MCF 10A (cell line): ENCODE measurements at regions of chr7 and their contacts with region 1.

Region 1: GRCh38 chr7:22559829-22560489 is 60.0 kb upstream of the STEAP1B start:
- DNase-seq: peak; percentile 85
- H3K4me3 Mint-ChIP-seq: no peak overlapping the region
- H3K27ac Mint-ChIP-seq: no peak overlapping the region
- H3K4me1 Mint-ChIP-seq: peaks cover 25% of the 10 kb centered on the region
- H3K27me3 Mint-ChIP-seq: peaks cover 7% of the 10 kb centered on the region
- CTCF ChIP-seq: peak; percentile 85

Region 2: DNA sequence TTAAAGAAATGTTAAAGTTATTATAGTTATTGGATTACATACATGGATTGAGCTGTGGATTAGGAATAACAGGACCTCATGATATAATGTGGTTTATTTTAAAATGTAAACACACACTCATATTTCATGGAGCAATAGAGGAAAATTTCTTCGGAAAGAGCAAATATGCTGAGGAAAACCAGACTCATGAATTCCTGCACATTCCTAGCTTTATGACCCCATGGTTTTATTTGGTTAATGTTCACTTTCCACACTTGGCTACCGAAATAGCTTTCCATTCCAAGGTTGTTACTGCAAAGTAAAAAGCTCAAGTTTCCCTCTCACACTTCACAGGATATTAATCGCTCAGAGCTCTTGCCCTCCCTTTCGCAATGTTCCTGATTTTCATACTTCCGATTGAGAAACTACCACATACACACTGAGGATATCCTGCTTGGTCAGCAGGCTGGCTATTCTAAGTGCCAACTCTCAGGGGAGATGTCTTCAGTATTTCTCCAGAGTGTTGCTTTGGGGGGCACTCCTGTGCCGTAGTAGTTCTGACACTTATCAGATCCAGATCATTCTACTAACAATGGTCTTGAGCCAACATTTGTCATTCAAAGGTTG is 17.5 kb after region 1 on chr7:
- CTCF ChIA-PET with region 1: interaction called, 17 read pairs
- POLR2A ChIA-PET with region 1: interaction called, 3 read pairs
- intact Hi-C with region 1: loop called (anchors 1 kb)
- DNase-seq: peak; percentile 95
- H3K4me3 Mint-ChIP-seq: no peak overlapping the region
- H3K27ac Mint-ChIP-seq: peak overlapping the region; percentile 85
- H3K4me1 Mint-ChIP-seq: peaks cover 42% of the 10 kb centered on the region
- H3K27me3 Mint-ChIP-seq: no peaks in the 10 kb centered on the region
- CTCF ChIP-seq: no peak

Region 3: GRCh38 chr7:22627136-22627535 is 67.2 kb after region 1 on chr7:
- CTCF ChIA-PET with region 1: no interaction called
- POLR2A ChIA-PET with region 1: no interaction called
- intact Hi-C with region 1: no loop called
- DNase-seq: no peak
- H3K4me3 Mint-ChIP-seq: no peak overlapping the region
- H3K27ac Mint-ChIP-seq: no peak overlapping the region
- H3K4me1 Mint-ChIP-seq: no peaks in the 10 kb centered on the region
- H3K27me3 Mint-ChIP-seq: no peaks in the 10 kb centered on the region
- CTCF ChIP-seq: no peak

Region 4: GRCh38 chr7:22657479-22657878 is 97.5 kb after region 1 on chr7:
- CTCF ChIA-PET with region 1: no interaction called
- POLR2A ChIA-PET with region 1: no interaction called
- intact Hi-C with region 1: loop called (anchors 1 kb)
- DNase-seq: no peak
- H3K4me3 Mint-ChIP-seq: no peak overlapping the region
- H3K27ac Mint-ChIP-seq: no peak overlapping the region
- H3K4me1 Mint-ChIP-seq: peaks cover 4% of the 10 kb centered on the region
- H3K27me3 Mint-ChIP-seq: no peaks in the 10 kb centered on the region
- CTCF ChIP-seq: no peak

Region 5: GRCh38 chr7:22688084-22688483 is 128.1 kb after region 1 on chr7:
- CTCF ChIA-PET with region 1: no interaction called
- POLR2A ChIA-PET with region 1: no interaction called
- intact Hi-C with region 1: no loop called
- DNase-seq: no peak
- H3K4me3 Mint-ChIP-seq: no peak overlapping the region
- H3K27ac Mint-ChIP-seq: no peak overlapping the region
- H3K4me1 Mint-ChIP-seq: no peaks in the 10 kb centered on the region
- H3K27me3 Mint-ChIP-seq: no peaks in the 10 kb centered on the region
- CTCF ChIP-seq: no peak

Region 6: DNA sequence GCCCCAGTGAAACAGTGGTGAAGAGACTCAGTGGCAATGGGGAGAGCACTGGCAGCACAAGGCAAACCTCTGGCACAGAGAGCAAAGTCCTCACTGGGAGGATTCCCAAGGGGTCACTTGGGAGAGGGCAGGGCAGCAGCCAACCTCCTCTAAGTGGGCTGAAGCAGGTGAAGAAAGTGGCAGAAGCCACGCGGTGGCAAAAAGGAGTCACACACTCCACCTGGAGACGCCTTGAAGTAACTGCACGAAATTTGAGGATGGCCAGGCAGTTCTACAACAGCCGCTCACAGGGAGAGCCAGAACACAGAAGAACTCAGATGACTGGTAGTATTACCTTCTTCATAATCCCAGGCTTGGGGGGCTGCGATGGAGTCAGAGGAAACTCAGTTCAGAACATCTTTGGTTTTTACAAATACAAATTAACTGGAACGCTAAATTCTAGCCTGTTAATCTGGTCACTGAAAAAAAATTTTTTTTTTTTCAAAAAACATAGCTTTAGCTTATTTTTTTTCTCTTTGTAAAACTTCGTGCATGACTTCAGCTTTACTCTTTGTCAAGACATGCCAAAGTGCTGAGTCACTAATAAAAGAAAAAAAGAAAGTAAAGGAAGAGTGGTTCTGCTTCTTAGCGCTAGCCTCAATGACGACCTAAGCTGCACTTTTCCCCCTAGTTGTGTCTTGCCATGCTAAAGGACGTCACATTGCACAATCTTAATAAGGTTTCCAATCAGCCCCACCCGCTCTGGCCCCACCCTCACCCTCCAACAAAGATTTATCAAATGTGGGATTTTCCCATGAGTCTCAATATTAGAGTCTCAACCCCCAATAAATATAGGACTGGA is 166.6 kb after region 1 on chr7:
- CTCF ChIA-PET with region 1: interaction called, 544 read pairs
- POLR2A ChIA-PET with region 1: interaction called, 52 read pairs
- intact Hi-C with region 1: loop called (anchors 1 kb)
- DNase-seq: peak; percentile 86
- H3K4me3 Mint-ChIP-seq: peak overlapping the region; percentile 72
- H3K27ac Mint-ChIP-seq: peak overlapping the region; percentile 71
- H3K4me1 Mint-ChIP-seq: peaks cover 45% of the 10 kb centered on the region
- H3K27me3 Mint-ChIP-seq: no peaks in the 10 kb centered on the region
- CTCF ChIP-seq: peak; percentile 63

Region 7: DNA sequence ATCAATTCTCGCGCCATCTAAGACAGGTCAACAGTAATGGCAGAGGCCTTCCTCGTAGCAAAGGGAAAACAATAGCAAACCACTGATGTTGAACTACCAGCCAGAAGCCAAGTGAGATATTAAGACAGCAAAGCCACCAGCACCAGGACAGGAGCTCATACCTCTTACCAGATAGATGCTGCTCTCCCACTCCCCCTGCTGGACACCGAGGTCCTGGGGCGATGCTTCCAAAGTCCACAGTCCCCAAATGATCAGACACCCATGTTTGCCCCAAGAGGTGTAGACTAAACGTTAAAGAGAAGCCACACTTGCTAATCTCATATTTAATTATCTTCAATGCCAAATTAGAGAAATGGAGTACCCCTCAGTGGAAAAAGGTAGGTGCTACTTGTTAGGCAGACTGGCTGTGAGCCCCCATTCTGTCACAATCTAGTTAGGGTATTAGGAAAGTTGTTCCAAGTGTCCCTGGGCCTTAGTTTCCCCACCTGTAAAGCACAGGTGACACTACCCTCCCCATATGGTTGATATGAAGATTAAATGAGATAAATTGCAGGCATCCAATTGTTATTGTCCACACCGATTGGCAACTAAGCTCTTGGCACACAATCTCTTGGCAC is 222.8 kb after region 1 on chr7:
- CTCF ChIA-PET with region 1: interaction called, 16 read pairs
- POLR2A ChIA-PET with region 1: no interaction called
- intact Hi-C with region 1: loop called (anchors 1 kb)
- DNase-seq: peak; percentile 71
- H3K4me3 Mint-ChIP-seq: no peak overlapping the region
- H3K27ac Mint-ChIP-seq: no peak overlapping the region
- H3K4me1 Mint-ChIP-seq: peaks cover 9% of the 10 kb centered on the region
- H3K27me3 Mint-ChIP-seq: no peaks in the 10 kb centered on the region
- CTCF ChIP-seq: peak; percentile 85